Psoas muscle (tissue), 8 donors: ENCODE measurements at regions of chr11 and their contacts with region 1.

Region 1: GRCh38 chr11:9884601-9885000 is 220.7 kb downstream of the SWAP70 start:
- DNase-seq: no peak
- ATAC-seq: no peak
- H3K4me3 ChIP-seq: no peak overlapping the region
- H3K27ac ChIP-seq: no peak overlapping the region
- H3K4me1 ChIP-seq: no peaks in the 10 kb centered on the region
- H3K27me3 ChIP-seq: no peaks in the 10 kb centered on the region
- CTCF ChIP-seq: no peak

Region 2: GRCh38 chr11:9825315-9825714 is 59.3 kb before region 1 on chr11:
- intact Hi-C with region 1: no loop called
- DNase-seq: no peak
- ATAC-seq: no peak
- H3K4me3 ChIP-seq: no peak overlapping the region
- H3K27ac ChIP-seq: no peak overlapping the region
- H3K4me1 ChIP-seq: no peaks in the 10 kb centered on the region
- H3K27me3 ChIP-seq: no peaks in the 10 kb centered on the region
- CTCF ChIP-seq: no peak

Region 3: DNA sequence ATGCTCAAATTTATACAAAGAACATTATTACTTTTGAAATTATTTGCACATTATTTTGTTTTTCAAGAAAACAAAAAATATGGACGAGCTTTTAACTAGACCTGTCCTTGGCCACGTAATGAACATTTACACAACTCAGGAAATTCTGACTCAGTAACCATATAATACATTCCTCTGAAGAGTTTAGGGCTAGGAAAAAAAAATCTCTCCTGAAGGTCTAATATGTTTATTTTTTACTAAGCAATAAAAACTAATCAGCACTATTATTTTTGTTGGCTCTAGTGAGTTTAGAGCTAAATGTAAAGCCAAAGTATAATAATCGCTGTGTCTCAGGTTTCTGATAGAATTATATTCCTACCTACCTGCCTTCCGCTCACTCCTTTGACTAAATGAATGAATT is 33.2 kb before region 1 on chr11:
- intact Hi-C with region 1: no loop called
- DNase-seq: no peak
- ATAC-seq: no peak
- H3K4me3 ChIP-seq: no peak overlapping the region
- H3K27ac ChIP-seq: no peak overlapping the region
- H3K4me1 ChIP-seq: no peaks in the 10 kb centered on the region
- H3K27me3 ChIP-seq: no peaks in the 10 kb centered on the region
- CTCF ChIP-seq: no peak

Region 4: DNA sequence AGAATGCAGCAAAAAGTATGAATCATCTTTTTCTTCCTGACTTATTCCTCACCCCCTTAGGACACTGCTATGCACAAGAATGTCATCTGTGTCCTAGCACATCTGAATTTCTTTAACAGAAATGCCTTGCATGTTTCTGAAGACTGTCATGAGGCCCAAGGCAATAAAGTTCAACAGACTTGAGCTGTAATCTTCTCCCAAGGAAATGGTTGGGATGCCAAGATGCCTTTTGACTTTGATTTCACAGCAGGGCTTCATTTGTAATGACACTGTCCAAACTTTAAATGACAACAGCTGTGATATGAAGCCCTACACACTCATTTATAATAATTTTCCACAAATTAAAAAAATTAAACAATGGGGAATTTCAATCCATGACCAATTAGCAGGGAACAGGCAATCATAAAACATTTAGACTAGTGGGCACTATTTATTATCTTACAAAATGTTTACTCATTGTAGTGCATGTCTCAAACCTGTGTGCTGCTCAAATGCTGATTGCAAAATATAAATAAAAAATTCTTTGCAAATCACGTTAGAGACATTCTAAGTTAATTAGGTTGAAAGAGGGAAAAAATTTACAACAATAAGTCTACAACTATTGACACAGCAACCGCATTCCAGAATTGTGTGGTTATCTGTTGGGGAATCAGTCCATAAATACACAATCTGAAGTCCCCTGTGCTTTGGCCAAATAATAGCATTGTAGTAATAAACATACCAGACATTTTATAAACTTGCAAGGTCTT is 21.6 kb after region 1 on chr11:
- intact Hi-C with region 1: loop called in 1 of 2 experiments (anchors 1 kb)
- DNase-seq: no peak
- ATAC-seq: peak in 2 of 4 donors; percentile 24 to 66
- H3K4me3 ChIP-seq: no peak overlapping the region
- H3K27ac ChIP-seq: no peak overlapping the region
- H3K4me1 ChIP-seq: no peaks in the 10 kb centered on the region
- H3K27me3 ChIP-seq: no peaks in the 10 kb centered on the region
- CTCF ChIP-seq: no peak